AG04449 (cell line): ENCODE measurements at regions of chr20 and their contacts with region 1.

Region 1: DNA sequence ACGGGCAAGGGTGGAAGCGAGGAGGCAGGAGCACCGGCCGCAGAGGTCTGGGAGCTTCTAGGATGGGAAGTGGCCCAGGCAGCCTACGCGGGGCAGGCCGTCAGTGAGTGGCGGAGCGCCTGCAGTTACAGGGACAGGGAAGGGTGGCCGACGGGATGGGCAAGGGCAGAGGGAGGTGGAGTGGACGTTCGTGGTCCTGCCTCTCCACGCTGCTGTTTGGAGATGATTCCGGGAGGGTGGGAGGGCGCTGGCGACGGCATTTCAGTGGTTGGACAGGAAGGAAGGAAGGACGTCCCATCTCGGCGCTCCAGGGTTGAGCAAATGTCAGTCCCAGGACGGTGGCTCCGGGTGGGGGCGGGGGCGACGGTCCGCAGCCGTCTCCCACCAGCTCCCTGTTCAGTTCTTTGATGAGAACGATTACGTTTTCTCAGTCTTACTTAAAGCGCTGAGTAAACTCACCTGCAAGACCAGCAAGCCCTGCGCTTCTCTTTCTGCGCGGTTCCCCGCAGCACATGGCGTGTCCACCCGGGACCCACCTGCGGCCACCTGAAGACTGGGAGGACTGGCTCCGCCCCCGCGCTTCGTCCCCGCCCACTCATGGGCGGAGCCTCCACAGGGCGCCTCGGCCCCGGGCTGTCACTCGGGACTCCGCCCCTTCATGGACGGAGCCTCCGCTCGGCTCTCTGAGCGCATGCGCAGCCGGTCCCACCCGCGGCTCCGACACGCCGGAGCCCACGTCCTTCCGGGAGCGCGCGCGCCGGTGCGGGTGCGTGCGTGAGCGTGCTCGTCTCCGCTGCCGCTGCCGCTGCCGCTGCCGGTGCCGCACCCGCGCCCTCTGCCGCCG is at the start of gene DNAJC5:
- DNase-seq: peak; percentile 16
- H3K4me3 ChIP-seq: peak within 1 kb of the TSS; percentile 66
- CTCF ChIP-seq: no peak

Region 2: DNA sequence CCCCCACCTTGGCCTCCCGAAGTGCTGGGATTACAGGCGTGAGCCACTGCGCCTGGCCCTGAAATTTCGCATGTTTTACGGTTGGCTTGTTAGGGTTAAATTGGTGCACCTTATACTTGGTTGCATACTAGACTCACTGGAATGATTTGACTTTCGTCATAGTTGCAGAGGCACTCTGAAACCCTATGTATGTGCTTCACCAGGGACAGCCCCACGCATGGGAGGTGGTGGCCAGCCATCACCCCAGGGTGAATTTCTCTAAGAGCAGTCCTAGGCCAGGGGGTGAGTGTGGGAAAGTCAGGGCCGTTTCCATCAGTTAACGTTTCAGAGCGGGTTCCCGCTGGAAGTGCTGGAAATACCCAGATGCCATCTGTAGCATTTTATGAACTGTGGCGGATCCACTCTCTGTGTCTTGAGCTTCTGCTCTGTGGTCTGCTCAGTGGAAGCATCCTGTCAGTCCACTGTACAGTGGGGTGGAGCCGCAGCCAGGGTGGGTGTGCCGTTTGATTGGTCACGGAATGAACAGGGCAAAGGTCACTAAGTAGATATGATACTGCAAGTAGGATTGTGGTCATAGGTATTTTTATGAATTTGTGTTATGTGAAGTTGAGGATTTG is 13.5 kb after region 1 on chr20:
- CTCF ChIA-PET with region 1: interaction called, 23 read pairs
- POLR2A ChIA-PET with region 1: no interaction called
- DNase-seq: no peak
- H3K4me3 ChIP-seq: no peak overlapping the region
- CTCF ChIP-seq: no peak

Region 3: GRCh38 chr20:63973636-63974402 is 79.2 kb after region 1 on chr20:
- CTCF ChIA-PET with region 1: interaction called, 15 read pairs
- POLR2A ChIA-PET with region 1: interaction called, 3 read pairs
- DNase-seq: no peak
- H3K4me3 ChIP-seq: peak overlapping the region; percentile 57
- CTCF ChIP-seq: peak; percentile 97